Endothelial cell of umbilical vein (primary cell): ENCODE measurements at regions of chr1 and their contacts with region 1.

Region 1: DNA sequence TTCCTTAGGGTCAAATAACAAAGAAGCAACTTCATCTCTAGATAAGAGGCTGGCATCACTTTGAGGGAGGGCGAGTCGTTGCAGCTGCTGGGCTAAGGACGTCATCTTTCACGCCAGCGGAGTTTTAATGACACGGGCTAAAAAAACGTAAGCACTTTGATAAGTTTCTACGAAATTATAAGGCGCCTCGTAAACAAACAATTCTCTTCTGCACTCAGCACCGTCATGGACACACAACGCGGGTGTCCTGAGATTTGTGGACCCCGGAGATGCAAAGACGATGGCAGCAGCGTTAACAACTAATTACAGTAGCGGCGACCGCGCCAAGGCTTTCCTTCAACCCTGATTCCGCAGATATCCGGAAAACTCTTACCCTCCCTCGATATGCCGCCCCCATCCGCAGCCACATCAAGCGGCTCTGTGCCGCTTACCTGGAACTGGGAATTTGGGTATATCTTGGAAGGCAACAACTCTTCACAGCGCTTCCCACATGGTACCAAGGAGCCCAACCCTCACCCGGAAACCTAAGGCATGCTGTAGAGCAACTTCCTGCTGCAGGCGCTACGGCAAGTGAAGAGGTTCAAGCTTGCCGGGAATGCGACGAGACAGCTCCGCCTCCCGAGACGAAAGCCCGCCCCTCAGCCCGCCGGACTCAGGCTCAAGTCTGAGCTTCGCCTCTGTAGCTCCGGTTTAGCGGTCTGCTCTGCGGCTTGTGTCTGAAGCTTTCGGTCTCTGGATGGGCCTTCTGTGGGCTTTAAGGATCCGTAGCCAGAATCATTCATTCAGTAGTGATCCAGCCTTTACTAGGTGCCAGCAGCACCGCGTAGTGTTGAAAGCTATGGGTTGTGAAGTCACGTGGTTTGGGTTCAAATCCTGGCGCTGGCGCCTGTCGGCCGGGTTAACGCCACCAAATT is at the start of gene HEATR1:
- DNase-seq: peak; percentile 97
- H3K4me3 ChIP-seq: peak within 1 kb of the TSS; percentile 64 to 86 (median 73)
- H3K27ac ChIP-seq: peak within 1 kb of the TSS; percentile 55
- H3K4me1 ChIP-seq: peaks cover 14% of the 10 kb centered on the region
- H3K27me3 ChIP-seq: no peaks in the 10 kb centered on the region
- CTCF ChIP-seq: no peak
- POLR2A ChIP-seq: peak; percentile 88
- total RNA-seq, gene HEATR1: 53.8 and 62.0 TPM in 2 replicates

Region 2: DNA sequence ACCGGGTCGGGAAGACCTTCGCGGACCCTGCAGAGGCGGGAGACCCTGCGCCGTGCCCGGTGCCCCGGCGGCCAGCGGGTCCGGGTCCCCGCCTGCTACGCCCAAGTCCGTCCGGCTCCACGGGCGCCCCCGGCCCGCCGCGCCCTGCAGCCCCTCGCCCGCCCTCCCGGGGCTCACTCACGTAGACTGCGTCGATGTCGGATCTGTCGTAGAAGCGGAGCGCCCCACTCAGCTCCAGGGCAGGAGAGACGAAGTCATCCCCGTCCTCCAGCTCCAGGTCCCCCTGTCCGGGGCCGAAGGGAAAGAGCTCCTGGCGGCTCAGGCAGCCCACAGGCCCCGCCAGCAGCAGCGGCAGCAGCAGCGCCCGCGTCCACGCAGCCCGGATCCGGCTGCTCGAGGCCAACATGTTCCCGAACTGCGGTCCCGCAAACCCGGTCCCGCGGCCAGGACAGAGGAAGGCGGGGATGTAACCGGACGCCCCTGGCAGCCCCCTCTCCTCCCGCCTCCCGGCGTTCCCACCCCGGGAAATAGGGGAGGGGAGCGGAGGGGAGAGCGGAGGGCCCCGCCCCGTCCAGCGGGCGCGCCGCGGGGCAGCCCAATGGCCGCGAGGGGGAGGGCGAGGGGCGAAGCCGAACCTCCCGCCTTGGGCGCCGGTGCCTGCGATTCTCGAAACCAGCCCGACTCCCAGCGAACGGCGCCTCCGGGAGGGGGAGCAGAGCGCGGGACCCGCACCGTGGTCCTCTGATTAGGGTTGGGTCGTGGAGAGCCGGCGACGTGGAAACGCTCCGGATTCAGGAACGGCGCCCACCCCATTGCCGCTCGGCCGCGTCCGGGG is 539.4 kb before region 1 on chr1 and contains the start of gene NID1:
- CTCF ChIA-PET with region 1: no interaction called
- POLR2A ChIA-PET with region 1: no interaction called
- dilution Hi-C with region 1: no loop called
- intact Hi-C with region 1: loop called (anchors 1 kb)
- DNase-seq: peak; percentile 75
- H3K4me3 ChIP-seq: peak within 1 kb of the TSS; percentile 75 to 89 (median 89)
- H3K27ac ChIP-seq: peak within 1 kb of the TSS; percentile 55
- H3K4me1 ChIP-seq: peaks cover 8% of the 10 kb centered on the region
- H3K27me3 ChIP-seq: no peaks in the 10 kb centered on the region
- CTCF ChIP-seq: peak in 1 of 2 donors; percentile 52
- POLR2A ChIP-seq: peak; percentile 27
- total RNA-seq, gene NID1: 87.0 and 102 TPM in 2 replicates

Region 3: DNA sequence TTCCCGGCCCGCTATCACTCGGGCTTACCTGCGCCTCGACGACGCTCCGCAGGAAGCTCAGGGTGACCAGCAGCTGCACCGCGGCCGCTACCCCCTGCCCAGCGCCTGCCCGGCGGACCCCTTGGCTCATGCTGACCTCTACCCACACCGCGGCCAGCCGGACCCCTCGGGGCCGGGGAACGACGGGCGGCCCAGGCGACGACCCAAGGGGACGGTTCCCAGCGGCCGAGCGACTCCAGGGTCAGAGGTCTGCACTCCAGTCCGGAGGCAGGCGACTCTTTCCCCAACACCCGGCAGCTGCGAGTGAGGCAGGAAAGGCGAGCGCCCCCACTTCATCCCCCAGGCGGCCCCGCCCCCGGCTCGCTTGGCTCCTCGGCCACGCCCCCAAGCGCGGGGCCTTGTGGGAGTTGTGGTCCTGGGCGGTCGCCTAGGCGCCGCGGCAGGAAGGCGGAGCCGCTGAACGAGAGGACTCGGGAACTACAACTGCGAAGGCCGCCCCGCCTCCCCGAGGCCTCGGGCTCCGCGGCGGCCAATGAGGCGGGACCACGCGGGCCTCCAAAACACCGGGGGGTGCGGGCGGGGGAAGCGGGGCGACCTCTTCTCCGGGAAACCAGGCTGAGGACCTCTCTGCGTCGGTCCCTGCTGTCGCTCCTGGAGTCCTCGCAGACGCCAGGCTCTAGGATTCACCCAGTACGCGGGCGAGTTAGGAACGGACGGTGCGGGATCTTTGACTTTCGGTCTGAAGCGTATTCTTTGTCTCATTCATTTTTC is 322.4 kb before region 1 on chr1 and contains the start of gene ERO1B:
- CTCF ChIA-PET with region 1: no interaction called
- POLR2A ChIA-PET with region 1: no interaction called
- dilution Hi-C with region 1: no loop called
- intact Hi-C with region 1: loop called (anchors 10 kb)
- DNase-seq: peak; percentile 95
- H3K4me3 ChIP-seq: peak within 1 kb of the TSS; percentile 39 to 99 (median 65)
- H3K27ac ChIP-seq: no peak within 1 kb of the TSS
- H3K4me1 ChIP-seq: peaks cover 3% of the 10 kb centered on the region
- H3K27me3 ChIP-seq: peaks cover 16 to 22% of the 10 kb centered on the region in 2 experiments
- CTCF ChIP-seq: peak in 1 of 2 donors; percentile 2
- POLR2A ChIP-seq: peak; percentile 21
- total RNA-seq, gene ERO1B: 3.6 and 5.1 TPM in 2 replicates

Region 4: GRCh38 chr1:236489710-236490377 is 114.4 kb before region 1 on chr1:
- CTCF ChIA-PET with region 1: no interaction called
- POLR2A ChIA-PET with region 1: no interaction called
- dilution Hi-C with region 1: no loop called
- intact Hi-C with region 1: no loop called
- DNase-seq: peak; percentile 37
- H3K4me3 ChIP-seq: no peak overlapping the region
- H3K27ac ChIP-seq: no peak overlapping the region
- H3K4me1 ChIP-seq: no peaks in the 10 kb centered on the region
- H3K27me3 ChIP-seq: no peaks in the 10 kb centered on the region
- CTCF ChIP-seq: peak; percentile 33 to 46
- POLR2A ChIP-seq: no peak

Region 5: DNA sequence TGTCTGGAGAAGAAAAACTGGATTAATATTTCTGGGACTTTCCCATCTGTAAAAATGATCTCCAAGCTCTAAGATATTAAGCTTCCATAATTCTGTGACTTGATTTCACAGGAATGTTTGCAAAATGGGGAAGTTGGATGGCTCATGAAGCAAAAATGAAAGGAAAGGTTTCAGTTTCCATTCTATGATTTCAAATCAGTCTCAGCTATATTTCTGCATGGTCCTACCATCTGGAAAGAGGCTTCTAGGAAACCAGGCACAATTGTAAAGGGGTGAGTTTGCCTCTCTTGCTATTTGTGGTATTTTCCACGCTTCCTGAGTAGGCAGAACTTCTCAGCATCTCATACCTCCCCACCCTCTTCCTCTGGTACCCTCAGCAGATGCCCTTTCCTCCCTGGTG is 59.7 kb after region 1 on chr1:
- CTCF ChIA-PET with region 1: no interaction called
- POLR2A ChIA-PET with region 1: no interaction called
- dilution Hi-C with region 1: no loop called
- intact Hi-C with region 1: no loop called
- DNase-seq: no peak
- H3K4me3 ChIP-seq: no peak overlapping the region
- H3K27ac ChIP-seq: no peak overlapping the region
- H3K4me1 ChIP-seq: no peaks in the 10 kb centered on the region
- H3K27me3 ChIP-seq: no peaks in the 10 kb centered on the region
- CTCF ChIP-seq: no peak
- POLR2A ChIP-seq: no peak

Region 6: GRCh38 chr1:236685917-236686814 is 81.9 kb after region 1 on chr1 and contains the start of gene ACTN2:
- CTCF ChIA-PET with region 1: interaction called, 5 read pairs
- POLR2A ChIA-PET with region 1: no interaction called
- dilution Hi-C with region 1: no loop called
- intact Hi-C with region 1: loop called (anchors 5 kb)
- DNase-seq: peak; percentile 31
- H3K4me3 ChIP-seq: peak within 1 kb of the TSS; percentile 19 to 62 (median 44)
- H3K27ac ChIP-seq: no peak within 1 kb of the TSS
- H3K4me1 ChIP-seq: peaks cover 7% of the 10 kb centered on the region
- H3K27me3 ChIP-seq: peaks cover 3 to 5% of the 10 kb centered on the region in 2 experiments
- CTCF ChIP-seq: no peak
- POLR2A ChIP-seq: no peak
- total RNA-seq, gene ACTN2: 0.28 and 0.55 TPM in 2 replicates

Region 7: DNA sequence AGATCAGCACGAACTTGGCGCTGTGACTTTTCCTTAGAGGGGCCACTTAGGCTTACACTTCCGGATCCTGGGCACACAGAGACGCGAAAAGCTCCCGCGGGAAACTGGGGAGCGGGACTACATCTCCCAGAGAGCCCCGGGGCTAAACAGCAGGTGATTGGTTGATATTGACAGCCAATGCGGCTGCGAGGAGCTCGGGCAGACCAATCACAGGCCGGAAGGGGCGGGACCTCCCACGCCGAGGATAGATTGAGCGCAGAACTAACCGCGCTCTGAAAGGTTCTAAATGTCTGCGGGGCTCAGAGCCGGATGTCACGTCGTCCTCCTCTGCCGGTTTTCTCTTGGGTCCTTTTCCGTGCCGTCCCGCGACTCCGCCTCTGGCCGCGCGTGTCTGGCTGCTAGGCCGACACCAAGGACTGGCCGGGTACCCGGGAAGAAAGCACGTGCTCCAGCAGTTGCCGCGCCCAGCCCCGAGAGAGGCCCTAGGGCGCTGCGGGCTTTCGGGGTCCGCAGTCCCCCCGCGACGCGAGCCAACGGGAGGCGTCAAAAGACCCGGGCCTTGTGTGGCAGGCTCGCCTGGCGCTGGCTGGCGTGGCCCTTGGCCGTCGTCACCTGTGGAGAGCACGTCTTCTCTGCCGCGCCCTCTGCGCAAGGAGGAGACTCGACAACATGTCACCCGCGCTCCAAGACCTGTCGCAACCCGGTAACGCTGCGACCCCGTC is 190.9 kb after region 1 on chr1 and contains the start of gene MTR:
- CTCF ChIA-PET with region 1: interaction called, 18 read pairs
- POLR2A ChIA-PET with region 1: interaction called, 8 read pairs
- dilution Hi-C with region 1: no loop called
- intact Hi-C with region 1: loop called (anchors 1 kb)
- DNase-seq: peak; percentile 98
- H3K4me3 ChIP-seq: peak within 1 kb of the TSS; percentile 50 to 92 (median 85)
- H3K27ac ChIP-seq: peak within 1 kb of the TSS; percentile 39
- H3K4me1 ChIP-seq: peaks cover 11% of the 10 kb centered on the region
- H3K27me3 ChIP-seq: no peaks in the 10 kb centered on the region
- CTCF ChIP-seq: no peak
- POLR2A ChIP-seq: peak; percentile 89
- total RNA-seq, gene MTR: 41.8 and 45.2 TPM in 2 replicates

Region 8: GRCh38 chr1:237386362-237387143 is 782.3 kb after region 1 on chr1:
- CTCF ChIA-PET with region 1: interaction called, 16 read pairs
- POLR2A ChIA-PET with region 1: no interaction called
- dilution Hi-C with region 1: no loop called
- intact Hi-C with region 1: no loop called
- DNase-seq: peak; percentile 9
- H3K4me3 ChIP-seq: no peak overlapping the region
- H3K27ac ChIP-seq: no peak overlapping the region
- H3K4me1 ChIP-seq: no peaks in the 10 kb centered on the region
- H3K27me3 ChIP-seq: no peaks in the 10 kb centered on the region
- CTCF ChIP-seq: peak; percentile 24 to 25
- POLR2A ChIP-seq: no peak